IMR-90 (cell line): ENCODE measurements at regions of chr1 and their contacts with region 1.

Region 1: GRCh38 chr1:241834733-241835377 is 13.1 kb upstream of the EXO1 start:
- DNase-seq: peak; percentile 79
- ATAC-seq: peak; percentile 40
- H3K4me3 ChIP-seq: no peak overlapping the region
- H3K27ac ChIP-seq: no peak overlapping the region
- H3K4me1 ChIP-seq: peaks cover 11% of the 10 kb centered on the region
- H3K27me3 ChIP-seq: no peaks in the 10 kb centered on the region
- CTCF ChIP-seq: peak; percentile 87
- POLR2A ChIP-seq: no peak
- RAD21 ChIP-seq: peak; percentile 81

Region 2: DNA sequence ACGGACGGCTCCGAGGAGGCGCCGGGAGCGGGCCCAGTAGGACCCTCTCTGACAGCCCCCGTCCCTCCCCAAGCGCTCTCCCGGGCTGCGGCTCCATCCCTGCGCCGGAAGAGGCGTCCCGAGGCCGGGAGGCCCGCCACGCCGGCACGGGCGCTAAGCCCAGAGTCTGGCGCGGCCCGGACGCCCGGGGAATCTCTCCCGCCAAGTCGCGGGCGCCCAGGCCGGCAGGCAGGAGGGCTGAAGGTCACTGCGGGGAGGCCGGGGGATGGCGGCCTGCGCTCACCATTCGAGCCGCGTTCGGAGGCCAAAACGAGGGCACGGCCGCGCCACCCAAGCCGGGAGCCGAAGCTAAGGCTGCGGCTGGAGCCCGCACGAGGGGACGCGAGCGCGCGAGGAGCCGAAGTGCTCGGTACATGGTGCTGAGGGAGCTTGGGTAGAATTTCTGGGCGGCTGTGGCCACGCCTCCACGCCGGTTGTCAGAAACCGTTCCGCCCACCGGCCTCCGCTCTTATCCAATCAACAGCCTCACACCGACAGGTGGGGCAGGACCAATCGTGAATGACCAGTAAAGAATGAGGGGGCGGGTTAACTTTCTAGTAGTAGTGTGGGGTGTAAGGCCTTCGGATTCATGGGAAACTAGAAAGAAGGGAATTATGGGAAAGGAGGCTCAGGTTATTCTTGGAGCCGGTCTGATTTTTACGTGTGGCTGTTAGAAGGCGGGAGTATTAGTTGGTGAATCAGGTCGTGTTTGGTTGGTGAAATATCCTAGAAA is 315.4 kb before region 1 on chr1 and contains the start of gene FH:
- CTCF ChIA-PET with region 1: no interaction called
- POLR2A ChIA-PET with region 1: no interaction called
- dilution Hi-C with region 1: no loop called
- in situ Hi-C with region 1: loop called (anchors 5 kb)
- intact Hi-C with region 1: no loop called
- DNase-seq: peak; percentile 98
- ATAC-seq: peak; percentile 98
- H3K4me3 ChIP-seq: peak within 1 kb of the TSS; percentile 94
- H3K27ac ChIP-seq: peak within 1 kb of the TSS; percentile 77
- H3K4me1 ChIP-seq: 0 out of 2 replicates have a peak, but pooled peaks cover 2% of the 10 kb centered on the region
- H3K27me3 ChIP-seq: peaks cover 8% of the 10 kb centered on the region
- CTCF ChIP-seq: no peak
- POLR2A ChIP-seq: peak; percentile 79
- RAD21 ChIP-seq: no peak
- total RNA-seq, gene FH: 78.7 and 101 TPM in 2 replicates

Region 3: DNA sequence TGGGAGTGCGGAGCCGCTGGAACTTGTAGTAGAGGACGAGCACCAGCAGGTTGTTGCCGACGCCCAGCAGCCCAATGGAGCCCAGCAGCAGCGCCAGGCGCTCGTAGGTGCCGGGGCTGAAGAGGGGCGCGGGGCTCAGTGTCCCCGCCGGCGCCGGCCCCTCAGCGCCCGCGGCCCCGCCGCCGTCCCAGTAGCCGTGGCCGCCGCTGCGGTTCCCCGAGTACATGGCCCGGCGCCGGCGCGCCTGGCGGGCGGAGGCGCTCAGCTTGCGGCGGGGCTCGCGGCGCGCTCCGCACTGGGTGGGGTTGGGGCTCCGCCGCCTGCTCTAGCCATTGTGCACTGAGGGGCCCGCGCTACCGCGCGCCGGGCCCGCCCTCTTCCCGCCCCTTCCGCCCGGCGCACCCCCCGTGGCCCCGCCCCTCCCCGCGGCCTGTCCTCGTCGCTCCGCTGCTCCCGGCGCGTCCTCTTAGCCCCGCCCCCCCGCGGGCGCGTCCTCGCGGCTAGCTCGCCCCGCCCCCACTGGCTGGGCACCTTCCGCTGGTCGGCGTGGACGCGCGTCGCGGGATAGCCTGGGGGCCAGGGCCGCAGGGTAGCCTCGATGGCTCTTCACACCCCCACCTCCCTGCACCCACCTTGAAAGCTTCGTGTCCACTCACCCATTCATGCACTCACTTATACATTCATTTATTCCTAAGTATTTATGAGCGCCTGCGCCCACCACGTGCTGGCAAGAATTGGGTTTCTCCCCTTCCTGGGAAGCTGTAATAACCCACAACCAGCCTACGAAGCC is 194.6 kb before region 1 on chr1 and contains the starts of genes CHML and OPN3:
- CTCF ChIA-PET with region 1: no interaction called
- POLR2A ChIA-PET with region 1: interaction called, 3 read pairs
- dilution Hi-C with region 1: no loop called
- in situ Hi-C with region 1: no loop called
- intact Hi-C with region 1: loop called (anchors 2 kb)
- DNase-seq: peak; percentile 79
- ATAC-seq: peak; percentile 96
- H3K4me3 ChIP-seq: peak within 1 kb of the TSS; percentile 100
- H3K27ac ChIP-seq: peak within 1 kb of the TSS; percentile 100
- H3K4me1 ChIP-seq: peaks cover 10% of the 10 kb centered on the region
- H3K27me3 ChIP-seq: no peaks in the 10 kb centered on the region
- CTCF ChIP-seq: no peak
- POLR2A ChIP-seq: peak; percentile 87
- RAD21 ChIP-seq: no peak
- total RNA-seq, gene CHML: 25.6 and 34.2 TPM in 2 replicates
- total RNA-seq, gene OPN3: 21.1 and 21.9 TPM in 2 replicates

Region 4: DNA sequence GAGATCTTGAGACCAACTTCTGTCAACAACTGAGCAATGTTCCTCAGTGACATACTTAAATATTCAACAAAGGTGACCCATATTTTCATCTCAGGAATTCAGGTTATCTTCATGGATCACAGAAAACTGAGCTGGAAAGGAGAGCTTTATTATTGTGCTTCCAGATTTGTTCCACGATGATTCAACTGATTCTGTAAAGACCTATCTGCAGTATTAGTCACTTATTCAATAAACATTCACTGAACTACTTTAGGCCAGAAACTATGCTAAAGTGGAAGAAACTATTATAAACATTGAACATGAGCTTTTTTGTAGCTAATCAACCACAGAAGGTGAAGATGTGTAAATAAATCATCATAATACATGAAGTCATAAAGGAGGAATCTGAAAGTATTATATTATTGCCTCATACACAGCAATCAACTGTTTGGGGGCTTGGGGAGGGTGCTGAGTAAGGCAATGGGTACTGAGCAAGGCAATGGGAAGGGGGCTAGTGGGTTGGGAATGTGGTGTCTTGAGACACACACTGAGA is 17.5 kb before region 1 on chr1:
- CTCF ChIA-PET with region 1: no interaction called
- POLR2A ChIA-PET with region 1: no interaction called
- dilution Hi-C with region 1: no loop called
- in situ Hi-C with region 1: no loop called
- intact Hi-C with region 1: loop called (anchors 1 kb)
- DNase-seq: peak; percentile 94
- ATAC-seq: peak; percentile 82
- H3K4me3 ChIP-seq: no peak overlapping the region
- H3K27ac ChIP-seq: peak overlapping the region; percentile 93
- H3K4me1 ChIP-seq: peaks cover 14% of the 10 kb centered on the region
- H3K27me3 ChIP-seq: no peaks in the 10 kb centered on the region
- CTCF ChIP-seq: no peak
- POLR2A ChIP-seq: no peak
- RAD21 ChIP-seq: no peak